Astrocyte of the cerebellum (primary cell): ENCODE measurements at regions of chr19 and their contacts with region 1.

Region 1: GRCh38 chr19:23872282-23872919 is 42.3 kb upstream of the ZNF726 start:
- DNase-seq: no peak
- H3K4me3 ChIP-seq: no peak overlapping the region
- CTCF ChIP-seq: no peak

Region 2: DNA sequence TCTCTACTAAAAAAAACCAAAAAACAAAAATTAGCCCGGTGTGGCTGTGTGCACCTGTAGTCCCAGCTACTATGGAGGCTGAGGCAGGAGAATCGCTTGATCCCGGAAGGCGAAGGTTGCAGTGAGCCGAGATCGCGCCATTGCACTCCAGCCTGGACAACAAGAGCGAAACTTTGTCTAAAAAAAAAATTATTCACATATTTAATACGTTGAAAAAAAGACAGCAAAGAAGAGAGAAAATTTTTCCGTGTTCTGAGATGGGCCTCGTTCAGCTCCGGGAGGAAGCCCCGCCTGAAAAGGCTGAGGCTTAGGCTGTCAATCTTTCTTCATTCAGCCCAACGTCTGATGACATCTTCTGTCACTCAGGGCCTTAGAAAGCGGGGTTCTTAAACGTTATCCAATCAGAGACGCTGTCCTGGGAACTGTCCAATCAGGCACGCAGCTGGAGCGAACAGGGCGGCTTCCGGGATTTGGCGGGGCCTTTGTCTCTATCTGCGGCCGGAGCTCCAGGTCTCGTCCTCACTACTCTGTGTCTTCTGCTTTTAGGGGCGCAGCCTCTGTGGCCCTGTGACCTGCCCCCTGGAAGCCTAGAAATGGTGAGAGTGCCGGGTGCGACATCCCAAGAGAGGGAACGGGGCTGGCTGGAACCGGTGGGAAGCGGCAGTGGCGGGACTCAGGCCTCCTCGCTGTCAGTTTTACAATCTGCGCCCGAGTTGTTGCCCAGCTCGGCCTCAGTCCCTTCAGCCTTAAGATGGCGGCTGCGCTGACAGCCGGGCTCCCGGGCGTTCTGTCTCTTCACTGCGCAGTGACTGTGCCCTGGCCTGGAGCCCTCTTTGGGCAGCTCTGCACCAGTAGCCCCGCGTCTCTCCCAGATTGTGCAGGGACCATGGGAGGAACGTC is 42.3 kb after region 1 on chr19 and contains the start of gene ZNF726:
- in situ Hi-C with region 1: loop called (anchors 5 kb)
- DNase-seq: peak; percentile 80
- H3K4me3 ChIP-seq: peak within 1 kb of the TSS; percentile 70
- CTCF ChIP-seq: no peak

Region 3: GRCh38 chr19:23971598-23971997 is 99.2 kb after region 1 on chr19:
- in situ Hi-C with region 1: no loop called
- DNase-seq: no peak
- H3K4me3 ChIP-seq: no peak overlapping the region
- CTCF ChIP-seq: no peak